GM12878 (cell line): ENCODE measurements at regions of chr9 and their contacts with region 1.

Region 1: GRCh38 chr9:110256380-110257096 is at the start of gene TXN:
- DNase-seq: peak; percentile 87
- ATAC-seq: peak; percentile 69
- H3K4me3 ChIP-seq: peak within 1 kb of the TSS; percentile 92
- H3K27ac ChIP-seq: peak within 1 kb of the TSS; percentile 91
- H3K4me1 ChIP-seq: peaks cover 24% of the 10 kb centered on the region
- H3K27me3 ChIP-seq: no peaks in the 10 kb centered on the region
- CTCF ChIP-seq: no peak
- EP300 ChIP-seq: peak; percentile 41 to 47; a peak in 1 of 4 replicates
- POLR2A ChIP-seq: peak; percentile 99
- RAD21 ChIP-seq: no peak
- polyA plus RNA-seq, gene TXN: 2,263 to 2,304 TPM

Region 2: GRCh38 chr9:109986521-109986991 is 270.0 kb before region 1 on chr9:
- CTCF ChIA-PET with region 1: no interaction called
- POLR2A ChIA-PET with region 1: no interaction called
- RAD21 ChIA-PET with region 1: no interaction called
- SMC1A ChIA-PET with region 1: no interaction called
- in situ Hi-C with region 1: no loop called
- intact Hi-C with region 1: no loop called
- DNase-seq: no peak
- ATAC-seq: no peak
- H3K4me3 ChIP-seq: no peak overlapping the region
- H3K27ac ChIP-seq: no peak overlapping the region
- H3K4me1 ChIP-seq: peaks cover under 1% of the 10 kb centered on the region; the same call in 1 of the 2 replicates
- H3K27me3 ChIP-seq: no peaks in the 10 kb centered on the region
- CTCF ChIP-seq: no peak
- EP300 ChIP-seq: no peak
- POLR2A ChIP-seq: no peak
- RAD21 ChIP-seq: no peak

Region 3: DNA sequence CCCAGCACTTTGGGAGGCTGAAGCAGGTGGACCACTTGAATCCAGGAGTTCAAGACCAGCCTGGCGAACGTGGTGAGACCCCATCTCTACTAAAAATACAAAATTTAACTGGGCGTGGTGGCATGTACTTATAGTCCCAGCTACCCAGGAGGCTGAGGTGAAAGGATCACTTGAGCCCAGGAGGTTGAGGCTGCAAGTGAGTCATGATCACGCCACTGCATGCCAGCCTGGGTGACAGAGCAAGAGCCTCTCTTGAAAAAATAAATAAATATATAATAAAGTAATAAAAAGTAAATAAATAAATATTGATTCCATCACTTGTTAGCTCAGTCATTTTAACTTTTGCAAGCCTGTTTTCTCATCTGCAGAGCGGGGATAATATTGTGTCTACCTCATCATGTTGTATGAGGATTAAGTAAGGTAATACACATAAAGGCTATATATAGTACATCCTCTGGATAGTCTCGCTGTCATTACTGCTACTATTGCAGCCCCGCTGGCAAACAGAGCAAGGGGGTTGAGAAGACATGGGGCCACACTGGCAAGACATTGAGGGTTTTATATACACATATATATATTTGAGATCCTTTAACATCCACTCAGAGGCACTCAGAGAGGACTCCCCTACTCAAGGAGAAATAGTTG is 259.5 kb before region 1 on chr9:
- CTCF ChIA-PET with region 1: no interaction called
- POLR2A ChIA-PET with region 1: no interaction called
- RAD21 ChIA-PET with region 1: no interaction called
- SMC1A ChIA-PET with region 1: no interaction called
- in situ Hi-C with region 1: no loop called
- intact Hi-C with region 1: no loop called
- DNase-seq: no peak
- ATAC-seq: no peak
- H3K4me3 ChIP-seq: no peak overlapping the region
- H3K27ac ChIP-seq: no peak overlapping the region
- H3K4me1 ChIP-seq: no peaks in the 10 kb centered on the region
- H3K27me3 ChIP-seq: no peaks in the 10 kb centered on the region
- CTCF ChIP-seq: no peak
- EP300 ChIP-seq: no peak
- POLR2A ChIP-seq: no peak
- RAD21 ChIP-seq: no peak

Region 4: DNA sequence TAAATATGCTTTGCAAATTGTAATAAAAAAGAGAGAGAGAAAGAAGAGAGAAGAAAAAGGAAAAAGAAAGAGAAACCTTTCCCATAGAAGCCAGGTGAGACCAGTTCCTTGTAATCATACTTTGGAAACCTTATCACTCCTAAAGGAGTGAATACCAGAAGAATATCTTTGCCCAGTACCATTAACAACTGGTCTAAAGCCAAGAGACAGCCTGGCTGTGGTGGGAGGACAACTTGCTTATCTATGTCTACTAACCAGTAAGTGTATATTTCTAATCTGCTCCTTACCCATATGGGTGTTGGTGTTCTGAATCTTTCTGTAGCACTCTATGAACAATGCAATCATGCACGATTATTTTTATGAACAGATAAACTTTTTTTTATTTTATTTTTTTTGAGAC is 10.3 kb after region 1 on chr9:
- CTCF ChIA-PET with region 1: interaction called, 7 read pairs
- POLR2A ChIA-PET with region 1: no interaction called
- RAD21 ChIA-PET with region 1: no interaction called
- SMC1A ChIA-PET with region 1: interaction called, 13 read pairs
- in situ Hi-C with region 1: no loop called
- intact Hi-C with region 1: no loop called
- DNase-seq: no peak
- ATAC-seq: no peak
- H3K4me3 ChIP-seq: no peak overlapping the region
- H3K27ac ChIP-seq: no peak overlapping the region
- H3K4me1 ChIP-seq: no peaks in the 10 kb centered on the region
- H3K27me3 ChIP-seq: no peaks in the 10 kb centered on the region
- CTCF ChIP-seq: no peak
- EP300 ChIP-seq: no peak
- POLR2A ChIP-seq: no peak
- RAD21 ChIP-seq: no peak